ENCODE measurements at regions of chr4 and their contacts with region 1.

Region 1: DNA sequence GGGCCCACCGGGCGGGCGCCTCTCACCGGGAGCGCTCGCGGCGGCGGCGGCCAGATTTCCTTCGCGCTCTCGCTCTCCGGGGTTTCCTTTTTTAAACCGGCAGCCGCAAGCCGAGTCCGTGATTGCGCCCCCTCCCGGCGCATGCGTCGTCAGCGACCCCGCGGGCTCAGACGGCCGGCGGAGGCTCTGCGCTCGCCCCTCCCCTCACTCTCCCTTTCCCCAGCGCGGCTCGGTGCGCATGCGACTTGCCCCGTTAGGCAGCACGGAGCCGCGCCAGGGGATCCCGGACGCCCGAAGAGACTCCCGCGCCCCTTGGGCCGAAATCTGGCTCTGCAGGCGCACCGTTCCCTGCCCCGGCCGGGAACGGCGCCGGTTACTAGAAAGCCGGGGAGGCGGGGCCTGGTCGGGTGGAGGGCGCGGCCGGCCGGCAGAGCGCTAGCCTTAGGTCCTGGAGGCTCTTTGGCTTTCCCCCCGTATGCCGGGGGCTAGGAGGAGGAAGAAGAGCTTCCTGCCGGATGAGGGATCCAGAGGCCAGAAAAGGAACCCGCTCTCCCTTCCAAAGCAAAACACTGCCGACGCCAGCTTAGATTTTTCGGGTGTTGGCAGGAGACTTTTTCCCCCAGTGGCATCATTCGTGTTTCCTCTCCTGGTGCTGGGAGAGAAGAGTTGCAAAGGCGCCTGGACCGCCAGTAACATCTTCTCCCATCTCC is at the start of gene CLOCK:
- DNase-seq: peak; percentile 95
- ATAC-seq: peak; percentile 93
- total RNA-seq, gene CLOCK: 36.2 TPM

Region 2: GRCh38 chr4:55345980-55346850 is 200.7 kb before region 1 on chr4 and contains the start of gene SRD5A3:
- intact Hi-C with region 1: loop called (anchors 5 kb)
- DNase-seq: peak; percentile 93
- ATAC-seq: peak; percentile 98
- total RNA-seq, gene SRD5A3: 9.5 TPM

Region 3: GRCh38 chr4:55395529-55396307 is 151.2 kb before region 1 on chr4 and contains the start of gene TMEM165:
- intact Hi-C with region 1: loop called (anchors 5 kb)
- DNase-seq: peak; percentile 96
- ATAC-seq: peak; percentile 98
- total RNA-seq, gene TMEM165: 38.3 TPM

Region 4: GRCh38 chr4:55409468-55410171 is 137.3 kb before region 1 on chr4:
- intact Hi-C with region 1: loop called (anchors 5 kb)
- DNase-seq: no peak
- ATAC-seq: peak; percentile 42

Region 5: GRCh38 chr4:55444827-55445226 is 102.1 kb before region 1 on chr4:
- intact Hi-C with region 1: loop called (anchors 5 kb)
- DNase-seq: no peak
- ATAC-seq: no peak

Region 6: GRCh38 chr4:55791666-55792065 is 244.8 kb after region 1 on chr4:
- intact Hi-C with region 1: no loop called
- DNase-seq: no peak
- ATAC-seq: no peak

Region 7: GRCh38 chr4:55853484-55854046 is 306.7 kb after region 1 on chr4 and contains the start of gene EXOC1:
- intact Hi-C with region 1: loop called (anchors 5 kb)
- DNase-seq: peak; percentile 100
- ATAC-seq: peak; percentile 99
- total RNA-seq, gene EXOC1: 19.8 TPM

Measured in Right ventricle myocardium inferior (tissue), 1 donor.